ENCODE measurements at regions of chr2 and their contacts with region 1.

Region 1: GRCh38 chr2:239288951-239289511 is 111.8 kb downstream of the HDAC4 start:
- DNase-seq: peak in 6 of 14 experiments; percentile 19 to 74 (median 55)
- ATAC-seq: peak; percentile 68
- H3K4me3 ChIP-seq: peak overlapping the region; percentile 39
- H3K4me3 Mint-ChIP-seq: peak overlapping the region; percentile 82
- H3K27ac ChIP-seq: peak overlapping the region; percentile 73 to 81
- H3K27ac Mint-ChIP-seq: peak overlapping the region; percentile 95
- H3K4me1 ChIP-seq: peaks cover 63% of the 10 kb centered on the region
- H3K4me1 Mint-ChIP-seq: peaks cover 75% of the 10 kb centered on the region
- H3K27me3 ChIP-seq: no peaks in the 10 kb centered on the region
- H3K27me3 Mint-ChIP-seq: no peaks in the 10 kb centered on the region
- CTCF ChIP-seq: no peak

Region 2: GRCh38 chr2:239181907-239182581 is 107.0 kb before region 1 on chr2:
- CTCF ChIA-PET with region 1: no interaction called
- POLR2A ChIA-PET with region 1: no interaction called
- intact Hi-C with region 1: no loop called
- DNase-seq: peak in 1 of 14 experiments; percentile 19
- ATAC-seq: peak; percentile 41
- H3K4me3 ChIP-seq: no peak overlapping the region
- H3K4me3 Mint-ChIP-seq: no peak overlapping the region
- H3K27ac ChIP-seq: no peak overlapping the region
- H3K27ac Mint-ChIP-seq: no peak overlapping the region
- H3K4me1 ChIP-seq: no peaks in the 10 kb centered on the region
- H3K4me1 Mint-ChIP-seq: no peaks in the 10 kb centered on the region
- H3K27me3 ChIP-seq: no peaks in the 10 kb centered on the region
- H3K27me3 Mint-ChIP-seq: no peaks in the 10 kb centered on the region
- CTCF ChIP-seq: no peak

Region 3: DNA sequence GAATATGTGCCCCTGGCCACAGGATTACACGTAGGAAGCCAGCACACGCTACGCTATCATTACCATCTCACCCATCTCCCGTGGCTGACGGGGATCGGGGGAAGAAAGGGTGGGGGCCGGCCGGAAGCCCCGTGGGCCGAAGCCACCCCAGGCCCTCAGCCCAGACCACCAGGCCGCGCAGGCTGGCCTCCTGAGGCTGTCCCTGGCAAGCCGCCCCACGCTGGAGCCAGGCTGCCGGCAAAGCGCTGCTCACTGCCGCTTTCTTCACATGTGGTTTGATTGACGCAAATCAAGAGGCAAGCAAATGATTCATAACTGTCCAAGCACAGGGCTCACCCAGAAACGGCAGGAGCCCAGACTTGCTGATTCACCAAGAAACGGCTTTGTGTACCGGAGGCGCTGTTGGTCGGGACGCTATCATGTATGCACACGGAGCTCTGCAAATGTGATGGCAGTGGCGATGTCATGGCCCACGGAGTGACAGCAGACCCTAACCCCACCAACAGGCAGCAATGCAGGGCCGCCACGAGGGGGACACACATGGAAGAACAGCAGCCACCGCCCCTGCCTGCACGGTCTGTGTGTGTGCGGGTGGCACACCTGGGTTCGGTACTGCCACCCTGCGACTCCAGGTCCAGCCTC is 13.9 kb before region 1 on chr2:
- CTCF ChIA-PET with region 1: interaction called, 26 read pairs
- POLR2A ChIA-PET with region 1: interaction called, 30 read pairs
- intact Hi-C with region 1: loop called in 1 of 2 experiments (anchors 2 kb)
- DNase-seq: peak; percentile 70 to 95 (median 80)
- ATAC-seq: peak; percentile 88
- H3K4me3 ChIP-seq: peak overlapping the region; percentile 47
- H3K4me3 Mint-ChIP-seq: peak overlapping the region; percentile 79
- H3K27ac ChIP-seq: peak overlapping the region; percentile 19 to 55
- H3K27ac Mint-ChIP-seq: peak overlapping the region; percentile 93
- H3K4me1 ChIP-seq: peaks cover 46% of the 10 kb centered on the region
- H3K4me1 Mint-ChIP-seq: peaks cover 64% of the 10 kb centered on the region
- H3K27me3 ChIP-seq: no peaks in the 10 kb centered on the region
- H3K27me3 Mint-ChIP-seq: no peaks in the 10 kb centered on the region
- CTCF ChIP-seq: no peak

Region 4: GRCh38 chr2:239318790-239319661 is 30.0 kb after region 1 on chr2:
- CTCF ChIA-PET with region 1: interaction called, 3 read pairs
- POLR2A ChIA-PET with region 1: interaction called, 11 read pairs
- intact Hi-C with region 1: no loop called
- DNase-seq: peak in 5 of 14 experiments; percentile 32 to 61 (median 57)
- ATAC-seq: no peak
- H3K4me3 ChIP-seq: peak overlapping the region; percentile 49
- H3K4me3 Mint-ChIP-seq: peak overlapping the region; percentile 90
- H3K27ac ChIP-seq: peak overlapping the region; percentile 37 to 61
- H3K27ac Mint-ChIP-seq: peak overlapping the region; percentile 97
- H3K4me1 ChIP-seq: peaks cover 69% of the 10 kb centered on the region
- H3K4me1 Mint-ChIP-seq: peaks cover 70% of the 10 kb centered on the region
- H3K27me3 ChIP-seq: no peaks in the 10 kb centered on the region
- H3K27me3 Mint-ChIP-seq: no peaks in the 10 kb centered on the region
- CTCF ChIP-seq: no peak

Region 5: DNA sequence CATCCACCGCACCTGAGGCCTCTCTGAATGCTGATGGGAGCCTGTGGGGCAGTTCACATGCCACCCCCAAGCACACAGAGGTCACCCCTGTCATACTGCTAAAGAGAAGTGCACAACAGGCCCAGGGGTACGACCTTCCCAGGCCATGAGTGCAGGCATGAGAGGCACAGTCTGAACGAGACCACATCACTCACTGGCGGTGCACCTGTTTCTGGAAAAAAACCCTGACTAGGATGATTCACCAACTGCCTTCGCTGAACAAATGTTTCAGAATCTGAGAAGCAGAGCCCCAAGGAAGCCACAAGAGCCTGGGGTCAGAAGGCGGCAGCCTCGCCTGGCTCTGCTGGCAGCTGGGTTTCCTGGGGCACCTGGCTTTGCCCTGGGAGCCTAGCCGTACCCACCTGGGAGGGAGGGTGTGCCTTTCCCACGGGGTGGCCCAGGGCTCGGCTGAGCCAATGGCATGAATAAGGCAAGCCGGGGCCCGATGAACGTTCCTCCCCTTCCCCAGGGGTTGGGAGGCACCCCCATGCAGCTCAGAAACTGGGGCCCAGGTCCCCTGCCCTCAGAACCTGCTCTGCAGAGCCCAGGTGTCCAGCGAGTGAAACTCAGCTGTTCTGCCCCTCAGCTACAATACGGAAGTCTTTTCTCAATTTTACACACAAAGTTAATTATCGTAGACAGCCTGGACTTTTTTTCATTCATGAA is 38.0 kb after region 1 on chr2:
- CTCF ChIA-PET with region 1: interaction called, 3 read pairs
- POLR2A ChIA-PET with region 1: interaction called, 11 read pairs
- intact Hi-C with region 1: loop called (anchors 5 kb)
- DNase-seq: peak; percentile 46 to 89 (median 74)
- ATAC-seq: peak; percentile 77
- H3K4me3 ChIP-seq: no peak overlapping the region
- H3K4me3 Mint-ChIP-seq: peak overlapping the region; percentile 75
- H3K27ac ChIP-seq: peak overlapping the region; percentile 71 to 73
- H3K27ac Mint-ChIP-seq: peak overlapping the region; percentile 93
- H3K4me1 ChIP-seq: peaks cover 78% of the 10 kb centered on the region
- H3K4me1 Mint-ChIP-seq: peaks cover 85% of the 10 kb centered on the region
- H3K27me3 ChIP-seq: no peaks in the 10 kb centered on the region
- H3K27me3 Mint-ChIP-seq: no peaks in the 10 kb centered on the region
- CTCF ChIP-seq: no peak

Region 6: DNA sequence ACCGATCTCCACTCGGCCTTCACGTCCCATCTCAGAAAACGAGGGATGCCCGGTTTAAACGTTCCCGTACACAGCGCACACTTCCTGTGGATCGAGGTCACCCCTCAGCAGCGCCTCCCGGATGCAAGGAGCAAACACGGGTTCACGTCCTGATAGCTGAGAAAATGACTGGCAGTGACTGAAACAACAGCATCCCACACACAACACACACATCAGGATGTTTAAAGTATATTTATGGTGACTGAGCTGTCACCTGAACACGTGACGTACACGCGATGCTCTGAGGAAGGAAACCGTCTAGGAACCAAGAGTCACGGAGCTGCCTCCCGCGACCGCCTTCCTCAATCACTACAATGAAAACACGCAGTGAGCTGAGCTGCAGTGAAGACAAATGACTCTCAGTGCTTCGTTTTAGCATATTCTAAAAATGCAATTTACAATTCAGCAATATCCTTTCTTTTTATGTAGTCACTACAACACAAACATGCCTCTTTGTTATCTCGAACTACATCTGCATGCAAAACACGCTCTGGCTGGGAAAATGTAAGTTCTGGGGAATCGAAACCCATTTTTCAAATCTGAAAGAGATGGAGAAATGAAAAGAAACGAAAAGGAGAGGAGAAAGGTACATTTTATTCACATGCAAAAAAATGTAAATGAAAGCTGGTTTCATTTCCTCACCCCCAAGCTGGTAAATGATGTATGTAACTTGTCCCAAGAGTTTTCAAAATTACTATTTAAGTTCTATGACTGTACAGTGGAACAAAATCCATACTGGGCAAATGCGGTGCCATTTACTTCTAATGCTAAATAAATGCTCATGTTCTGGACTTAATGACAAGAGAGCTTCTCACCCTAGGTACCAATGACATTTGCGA is 92.0 kb after region 1 on chr2:
- CTCF ChIA-PET with region 1: no interaction called
- POLR2A ChIA-PET with region 1: interaction called, 3 read pairs
- intact Hi-C with region 1: loop called in 1 of 2 experiments (anchors 5 kb)
- DNase-seq: peak; percentile 56 to 89 (median 70)
- ATAC-seq: peak; percentile 93
- H3K4me3 ChIP-seq: peak overlapping the region; percentile 51
- H3K4me3 Mint-ChIP-seq: peak overlapping the region; percentile 86
- H3K27ac ChIP-seq: peak overlapping the region; percentile 61 to 65
- H3K27ac Mint-ChIP-seq: peak overlapping the region; percentile 92
- H3K4me1 ChIP-seq: peaks cover 17% of the 10 kb centered on the region
- H3K4me1 Mint-ChIP-seq: peaks cover 23% of the 10 kb centered on the region
- H3K27me3 ChIP-seq: no peaks in the 10 kb centered on the region
- H3K27me3 Mint-ChIP-seq: no peaks in the 10 kb centered on the region
- CTCF ChIP-seq: no peak